Activated B cell treated with CpG ODN at 0.5 μM for 24 hours (primary cell): ENCODE measurements at regions of chr9 and their contacts with region 1.

Region 1: DNA sequence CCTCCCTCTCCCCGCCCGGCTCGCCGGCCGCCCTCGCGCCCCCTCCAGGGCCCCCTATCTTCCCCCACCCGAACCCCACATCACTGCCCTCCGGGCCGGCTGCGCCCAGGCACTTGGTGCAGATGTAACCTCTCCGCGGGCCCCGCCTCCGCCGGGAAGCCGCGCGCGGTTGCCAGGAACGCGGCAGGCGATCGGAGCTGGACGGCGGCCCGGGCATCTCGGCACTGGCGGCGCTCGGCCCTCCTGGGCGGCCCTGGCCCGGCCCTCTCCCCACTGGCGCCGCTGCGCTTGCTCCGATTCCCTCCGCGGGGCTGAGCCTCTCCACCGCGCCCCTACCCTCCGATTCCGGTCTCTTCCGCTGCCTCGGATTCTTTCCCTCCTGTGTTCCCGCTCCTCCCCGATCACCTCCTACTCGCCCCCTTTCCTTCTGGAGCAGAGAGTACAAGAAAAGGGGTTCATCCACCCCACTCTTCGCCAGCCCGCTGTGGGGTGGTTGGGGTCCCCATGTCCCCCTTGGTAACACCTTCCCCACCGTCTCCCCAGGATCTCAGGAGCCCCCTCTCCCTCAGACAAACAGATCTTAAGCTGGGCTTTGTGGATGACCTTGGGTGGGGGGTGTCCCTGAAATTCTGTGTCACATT is 70.6 kb downstream of the C9orf50 start:
- DNase-seq: no peak
- ATAC-seq: no peak
- H3K4me3 Mint-ChIP-seq: peak overlapping the region; percentile 17
- H3K27ac Mint-ChIP-seq: no peak overlapping the region
- H3K4me1 Mint-ChIP-seq: peaks cover 4% of the 10 kb centered on the region
- H3K27me3 Mint-ChIP-seq: peaks cover 41% of the 10 kb centered on the region
- CTCF ChIP-seq: no peak

Region 2: GRCh38 chr9:129761901-129762364 is 211.6 kb after region 1 on chr9:
- CTCF ChIA-PET with region 1: no interaction called
- POLR2A ChIA-PET with region 1: interaction called, 10 read pairs
- intact Hi-C with region 1: no loop called
- DNase-seq: no peak
- ATAC-seq: no peak
- H3K4me3 Mint-ChIP-seq: no peak overlapping the region
- H3K27ac Mint-ChIP-seq: no peak overlapping the region
- H3K4me1 Mint-ChIP-seq: peaks cover 10% of the 10 kb centered on the region
- H3K27me3 Mint-ChIP-seq: peaks cover 16% of the 10 kb centered on the region
- CTCF ChIP-seq: no peak